PC-9 (cell line): ENCODE measurements at regions of chrX and their contacts with region 1.

Region 1: DNA sequence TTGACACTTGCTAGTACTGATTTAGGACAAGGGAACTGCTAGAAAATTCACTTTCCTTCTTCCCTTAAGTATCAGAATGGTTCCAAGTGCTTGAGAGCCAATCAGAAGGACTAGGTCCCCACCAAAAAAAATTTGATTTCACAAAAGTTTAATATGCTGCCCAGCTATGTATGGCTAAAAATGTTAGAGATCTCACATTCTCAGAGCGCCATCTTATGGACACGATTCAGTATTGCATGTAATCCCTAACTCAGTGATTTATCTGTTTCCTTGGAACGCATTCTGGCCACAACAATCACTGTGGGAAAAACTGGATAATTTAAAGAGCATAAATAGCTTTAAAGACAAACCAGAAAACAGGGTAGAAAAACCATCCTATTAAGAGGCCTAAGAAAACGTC is 255.1 kb upstream of the GPC4 start:
- DNase-seq: peak in 1 of 2 experiments; percentile 13
- H3K4me3 ChIP-seq: no peak overlapping the region
- H3K27ac ChIP-seq: no peak overlapping the region
- H3K4me1 ChIP-seq: peaks cover 22% of the 10 kb centered on the region
- H3K27me3 ChIP-seq: no peaks in the 10 kb centered on the region
- CTCF ChIP-seq: peak; percentile 92

Region 2: GRCh38 chrX:131830400-131831184 is 1839.8 kb before region 1 on chrX:
- CTCF ChIA-PET with region 1: no interaction called
- POLR2A ChIA-PET with region 1: no interaction called
- intact Hi-C with region 1: loop called (anchors 5 kb)
- DNase-seq: peak; percentile 91 to 97
- H3K4me3 ChIP-seq: peak overlapping the region; percentile 70
- H3K27ac ChIP-seq: peak overlapping the region; percentile 91
- H3K4me1 ChIP-seq: peaks cover 29% of the 10 kb centered on the region
- H3K27me3 ChIP-seq: no peaks in the 10 kb centered on the region
- CTCF ChIP-seq: peak; percentile 79

Region 3: DNA sequence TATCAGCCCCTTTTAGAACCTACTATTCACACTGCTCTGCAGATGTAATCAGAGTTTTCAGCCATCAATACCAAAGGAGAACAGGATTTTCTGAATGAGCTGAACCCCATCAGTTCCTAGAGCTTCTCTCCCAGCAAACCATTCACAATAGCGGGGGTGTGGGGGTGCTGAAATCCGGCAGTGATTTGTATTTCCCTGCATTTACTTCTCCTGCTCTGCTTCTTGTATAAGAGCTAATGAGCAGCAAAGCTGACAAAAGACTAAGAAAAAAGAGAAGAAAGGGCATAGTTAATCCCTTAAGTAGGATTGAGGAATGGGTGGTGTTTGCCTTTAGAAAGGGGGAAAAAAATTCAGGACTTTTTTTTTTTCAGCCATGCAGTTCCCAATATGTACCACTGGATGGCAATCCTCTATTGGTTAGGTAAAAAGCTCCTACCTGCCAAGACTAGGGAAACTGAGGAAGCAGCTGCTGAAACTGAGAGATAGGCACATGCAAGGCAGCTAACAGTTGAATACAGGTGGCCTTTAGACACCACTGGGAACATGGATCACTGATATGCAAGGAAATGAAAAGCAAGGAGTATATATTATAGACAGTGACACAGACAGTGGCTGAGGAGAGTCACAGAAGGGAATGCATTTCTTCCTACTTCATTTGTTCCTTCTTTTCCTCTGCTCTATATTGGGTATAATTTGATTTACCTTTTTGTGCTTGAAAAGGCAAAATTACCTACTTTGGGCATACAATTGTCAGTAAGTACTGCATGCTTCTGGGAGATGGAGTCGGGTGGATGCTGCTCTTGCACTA is 929.9 kb before region 1 on chrX:
- CTCF ChIA-PET with region 1: no interaction called
- POLR2A ChIA-PET with region 1: no interaction called
- intact Hi-C with region 1: loop called (anchors 10 kb)
- DNase-seq: no peak
- H3K4me3 ChIP-seq: no peak overlapping the region
- H3K27ac ChIP-seq: no peak overlapping the region
- H3K4me1 ChIP-seq: peaks cover 29% of the 10 kb centered on the region
- H3K27me3 ChIP-seq: no peaks in the 10 kb centered on the region
- CTCF ChIP-seq: peak; percentile 93

Region 4: GRCh38 chrX:133045986-133046385 is 624.4 kb before region 1 on chrX:
- CTCF ChIA-PET with region 1: no interaction called
- POLR2A ChIA-PET with region 1: no interaction called
- intact Hi-C with region 1: loop called (anchors 5 kb)
- DNase-seq: peak in 1 of 2 experiments; percentile 8
- H3K4me3 ChIP-seq: no peak overlapping the region
- H3K27ac ChIP-seq: no peak overlapping the region
- H3K4me1 ChIP-seq: no peaks in the 10 kb centered on the region
- H3K27me3 ChIP-seq: no peaks in the 10 kb centered on the region
- CTCF ChIP-seq: peak; percentile 72

Region 5: GRCh38 chrX:133229361-133229760 is 441.0 kb before region 1 on chrX:
- CTCF ChIA-PET with region 1: no interaction called
- POLR2A ChIA-PET with region 1: no interaction called
- intact Hi-C with region 1: loop called (anchors 10 kb)
- DNase-seq: peak; percentile 33 to 99
- H3K4me3 ChIP-seq: no peak overlapping the region
- H3K27ac ChIP-seq: peak overlapping the region; percentile 48
- H3K4me1 ChIP-seq: peaks cover 21% of the 10 kb centered on the region
- H3K27me3 ChIP-seq: no peaks in the 10 kb centered on the region
- CTCF ChIP-seq: no peak

Region 6: DNA sequence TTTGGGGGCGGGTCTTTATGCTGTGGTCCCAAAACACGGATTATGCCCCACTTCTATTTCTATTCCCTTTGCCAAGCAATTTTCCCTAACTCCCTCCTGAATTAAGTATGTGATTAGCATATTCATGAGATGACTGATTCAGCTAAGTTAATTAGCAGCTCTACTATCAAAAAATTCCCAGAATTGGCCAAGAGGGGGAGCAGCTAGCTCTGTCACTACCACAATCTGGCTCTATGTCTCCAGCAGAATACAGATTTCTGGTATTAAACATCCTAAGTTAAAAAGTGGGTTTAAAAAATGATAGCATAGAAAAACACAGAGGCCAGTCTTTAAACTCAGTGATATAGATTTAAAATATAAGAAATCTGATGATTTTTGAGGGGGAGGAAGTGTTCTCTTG is 335.4 kb before region 1 on chrX:
- CTCF ChIA-PET with region 1: interaction called, 8 read pairs
- POLR2A ChIA-PET with region 1: interaction called, 4 read pairs
- intact Hi-C with region 1: loop called (anchors 1 kb)
- DNase-seq: peak in 1 of 2 experiments; percentile 22
- H3K4me3 ChIP-seq: no peak overlapping the region
- H3K27ac ChIP-seq: no peak overlapping the region
- H3K4me1 ChIP-seq: no peaks in the 10 kb centered on the region
- H3K27me3 ChIP-seq: no peaks in the 10 kb centered on the region
- CTCF ChIP-seq: peak; percentile 83

Region 7: DNA sequence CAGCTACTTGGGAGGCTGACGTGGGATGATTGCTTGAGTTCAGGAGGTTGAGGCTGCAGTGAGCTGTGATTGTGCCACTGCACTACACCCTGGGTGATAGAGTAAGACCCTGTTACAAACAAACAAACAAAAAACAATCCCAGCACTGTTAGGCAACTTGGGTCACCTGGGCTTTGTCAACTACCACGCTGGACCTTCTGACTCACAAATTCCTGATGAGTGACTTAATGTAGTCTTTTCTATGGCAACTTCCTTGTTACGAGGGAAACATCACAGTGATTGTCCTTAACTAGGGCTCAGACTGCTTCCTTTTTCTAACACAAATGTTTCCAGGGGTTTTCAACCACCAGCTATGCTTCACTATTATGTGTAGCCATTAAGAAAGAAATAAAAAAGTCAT is 126.3 kb before region 1 on chrX:
- CTCF ChIA-PET with region 1: interaction called, 3 read pairs
- POLR2A ChIA-PET with region 1: no interaction called
- intact Hi-C with region 1: loop called (anchors 5 kb)
- DNase-seq: peak; percentile 70 to 97
- H3K4me3 ChIP-seq: peak overlapping the region; percentile 27; the same call in 1 of the 2 replicates
- H3K27ac ChIP-seq: peak overlapping the region; percentile 98
- H3K4me1 ChIP-seq: peaks cover 31% of the 10 kb centered on the region
- H3K27me3 ChIP-seq: no peaks in the 10 kb centered on the region
- CTCF ChIP-seq: no peak

Region 8: DNA sequence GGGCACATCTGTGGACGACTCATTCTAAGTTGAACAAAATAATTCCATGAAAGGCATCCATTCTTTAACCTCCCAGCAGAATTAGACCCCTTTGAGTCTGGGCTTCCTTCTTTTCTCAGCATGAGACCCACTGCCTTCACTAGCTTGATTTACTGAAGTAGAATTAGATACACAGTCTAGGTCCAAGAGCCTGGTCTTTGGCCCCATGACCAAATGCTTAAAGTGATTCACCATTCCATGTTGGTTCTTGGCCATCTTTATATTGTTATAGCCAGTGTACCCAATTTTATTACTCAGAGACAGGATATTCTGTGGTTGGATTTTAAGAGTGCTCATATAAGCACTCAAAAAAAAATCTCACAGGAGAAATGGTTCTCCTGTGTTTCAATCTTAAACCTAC is 99.8 kb before region 1 on chrX:
- CTCF ChIA-PET with region 1: no interaction called
- POLR2A ChIA-PET with region 1: no interaction called
- intact Hi-C with region 1: no loop called
- DNase-seq: no peak
- H3K4me3 ChIP-seq: no peak overlapping the region
- H3K27ac ChIP-seq: no peak overlapping the region
- H3K4me1 ChIP-seq: no peaks in the 10 kb centered on the region
- H3K27me3 ChIP-seq: no peaks in the 10 kb centered on the region
- CTCF ChIP-seq: no peak

Region 9: GRCh38 chrX:134324359-134324758 is 654.0 kb after region 1 on chrX:
- CTCF ChIA-PET with region 1: no interaction called
- POLR2A ChIA-PET with region 1: no interaction called
- intact Hi-C with region 1: no loop called
- DNase-seq: no peak
- H3K4me3 ChIP-seq: no peak overlapping the region
- H3K27ac ChIP-seq: no peak overlapping the region
- H3K4me1 ChIP-seq: no peaks in the 10 kb centered on the region
- H3K27me3 ChIP-seq: peaks cover 3% of the 10 kb centered on the region; the same call in 1 of the 2 replicates
- CTCF ChIP-seq: no peak